ENCODE measurements at regions of chr3 and their contacts with region 1.

Region 1: DNA sequence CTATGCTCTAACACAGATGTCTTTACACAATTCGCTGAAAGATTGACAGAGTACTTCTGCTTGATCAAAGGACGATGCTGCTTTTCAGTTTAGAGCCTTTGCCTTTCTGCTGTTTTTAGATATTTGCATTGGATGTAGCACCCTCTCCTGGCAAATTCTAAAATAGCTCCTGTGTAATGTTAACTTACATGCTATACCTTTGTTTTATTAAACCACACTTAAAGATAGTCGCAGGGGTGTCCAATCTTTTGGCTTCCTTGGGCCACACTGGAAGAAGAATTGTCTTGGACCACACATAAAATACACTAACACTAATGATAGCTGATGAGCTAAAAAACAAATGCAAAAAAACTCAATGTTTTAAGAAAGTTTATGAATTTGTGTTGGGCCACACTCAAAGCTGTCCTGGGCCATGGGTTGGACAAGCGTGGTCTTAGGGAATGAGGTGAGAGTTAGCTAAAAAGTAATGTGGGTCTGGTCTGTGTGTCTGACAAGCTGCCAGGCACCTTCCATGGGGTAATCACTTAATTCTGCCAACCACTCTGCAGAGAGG is 62.9 kb downstream of the ATG7 start:
- DNase-seq: no peak
- H3K4me3 ChIP-seq: peak overlapping the region in 1 of 59 donors; percentile 4
- H3K27ac ChIP-seq: peak overlapping the region in 4 of 59 donors; percentile 21 to 62 (median 48)
- H3K27me3 ChIP-seq: no peaks in the 10 kb centered on the region
- CTCF ChIP-seq: peak in 55 of 56 donors; percentile 48 to 86 (median 72)

Region 2: GRCh38 chr3:10758304-10759061 is 576.6 kb before region 1 on chr3:
- intact Hi-C with region 1: loop called in 1 of 2 experiments (anchors 10 kb)
- DNase-seq: peak in 9 of 10 donors; percentile 61 to 83 (median 75)
- H3K4me3 ChIP-seq: no peak overlapping the region
- H3K27ac ChIP-seq: peak overlapping the region in 15 of 59 donors; percentile 3 to 59 (median 41)
- H3K27me3 ChIP-seq: no peaks in the 10 kb centered on the region
- CTCF ChIP-seq: peak; percentile 40 to 96 (median 89)

Region 3: GRCh38 chr3:11060500-11061251 is 274.5 kb before region 1 on chr3:
- intact Hi-C with region 1: loop called in 1 of 2 experiments (anchors 2 kb)
- DNase-seq: peak; percentile 35 to 86 (median 70)
- H3K4me3 ChIP-seq: peak overlapping the region in 57 of 59 donors; percentile 9 to 67 (median 47)
- H3K27ac ChIP-seq: peak overlapping the region in 34 of 59 donors; percentile 3 to 75 (median 40)
- H3K27me3 ChIP-seq: peaks cover 0 to 13% (median 0%) of the 10 kb centered on the region in 45 donors
- CTCF ChIP-seq: peak; percentile 78 to 98 (median 95)

Region 4: GRCh38 chr3:11155341-11156025 is 179.6 kb before region 1 on chr3:
- intact Hi-C with region 1: loop called (anchors 5 to 10 kb)
- DNase-seq: peak; percentile 44 to 90 (median 78)
- H3K4me3 ChIP-seq: peak overlapping the region; percentile 30 to 77 (median 64)
- H3K27ac ChIP-seq: peak overlapping the region in 53 of 59 donors; percentile 6 to 90 (median 65)
- H3K27me3 ChIP-seq: peaks cover 0 to 33% (median 0%) of the 10 kb centered on the region in 45 donors
- CTCF ChIP-seq: peak in 55 of 56 donors; percentile 31 to 70 (median 59)

Region 5: DNA sequence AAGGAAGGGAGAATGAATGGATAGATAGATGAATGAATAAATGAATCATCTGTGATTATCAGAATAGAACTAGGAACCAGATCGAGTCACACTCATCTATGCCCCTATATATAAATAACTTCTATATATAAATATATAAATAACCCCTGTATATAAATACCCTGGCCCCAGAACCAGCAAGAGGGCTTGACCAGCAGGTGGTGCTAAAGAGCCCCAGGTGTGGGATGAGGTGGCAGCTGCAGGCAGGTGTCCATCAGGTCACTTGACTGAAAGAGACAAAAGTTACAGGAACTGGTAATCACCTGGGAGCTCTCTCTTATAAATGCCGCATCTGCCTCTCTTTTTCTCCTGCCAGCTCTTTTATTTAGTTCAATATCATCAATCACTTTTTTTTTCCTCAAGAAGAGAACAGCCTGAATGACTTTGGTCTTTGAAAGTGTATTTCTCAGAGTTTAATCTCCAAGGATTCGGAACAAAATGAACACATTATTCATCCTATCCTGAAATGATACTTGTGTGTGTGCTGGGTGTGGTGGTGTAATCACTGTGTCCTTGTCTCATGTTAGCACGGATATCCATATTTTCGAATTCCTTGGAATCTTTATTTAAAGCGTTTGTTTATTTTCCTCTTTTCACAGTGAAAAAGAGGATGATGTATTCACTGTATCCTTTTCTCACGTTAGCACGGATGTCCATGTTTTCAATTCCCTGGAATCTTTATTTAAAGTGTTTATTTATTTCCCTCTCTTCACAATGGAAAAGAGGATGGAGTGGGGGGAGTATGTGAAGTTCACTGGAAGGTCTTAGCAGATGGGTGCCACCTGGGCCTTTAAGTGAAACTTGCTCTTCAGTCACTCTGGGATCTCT is 98.3 kb before region 1 on chr3:
- intact Hi-C with region 1: loop called in 1 of 2 experiments (anchors 5 kb)
- DNase-seq: peak in 3 of 10 donors; percentile 19 to 36 (median 22)
- H3K4me3 ChIP-seq: no peak overlapping the region
- H3K27ac ChIP-seq: no peak overlapping the region
- H3K27me3 ChIP-seq: peaks cover 0 to 5% (median 0%) of the 10 kb centered on the region in 45 donors
- CTCF ChIP-seq: peak; percentile 42 to 81 (median 65)

Region 6: DNA sequence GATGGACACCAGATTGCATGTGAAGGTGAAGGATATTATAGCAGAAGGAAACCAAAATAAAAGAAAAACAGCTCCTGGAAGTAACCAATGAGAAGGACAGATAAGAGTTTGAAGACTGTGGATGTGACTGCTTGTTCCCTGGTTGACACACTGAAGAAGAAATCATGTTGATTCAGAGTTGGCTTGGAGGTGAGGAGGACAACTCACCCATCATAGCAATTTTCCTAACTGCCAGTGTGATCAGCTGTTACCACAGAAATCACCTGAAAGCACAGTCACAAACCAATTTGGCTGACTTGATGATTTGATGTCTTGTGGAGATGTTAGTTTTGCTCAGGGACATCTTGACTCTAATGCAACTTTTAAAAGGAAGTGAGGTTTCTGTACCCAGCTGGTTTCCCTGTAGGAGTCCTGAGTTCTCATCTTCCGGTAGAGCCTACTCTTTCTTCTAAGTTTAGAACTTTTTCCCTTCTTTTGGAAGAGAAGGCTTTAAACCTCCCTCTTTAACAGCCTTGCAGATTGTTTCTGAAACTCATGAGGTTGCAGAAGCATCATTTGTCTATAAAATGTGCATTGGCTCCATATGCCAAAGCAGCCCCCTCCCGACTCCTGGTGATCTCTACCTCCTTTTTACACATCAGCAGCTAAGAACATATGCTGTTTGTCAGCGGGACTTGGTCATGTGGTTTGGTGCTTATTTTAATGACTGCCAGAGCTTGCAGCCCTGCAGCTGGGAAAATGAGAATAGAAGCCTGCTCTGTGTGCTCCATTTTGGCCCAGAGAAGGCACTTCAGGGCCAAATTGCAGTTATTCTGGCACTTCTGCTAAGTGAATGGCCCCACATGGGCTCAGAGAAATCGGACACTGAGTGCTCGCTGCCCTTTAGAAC is 52.6 kb before region 1 on chr3:
- intact Hi-C with region 1: loop called (anchors 5 to 10 kb)
- DNase-seq: peak; percentile 37 to 89 (median 75)
- H3K4me3 ChIP-seq: peak overlapping the region in 35 of 59 donors; percentile 1 to 45 (median 19)
- H3K27ac ChIP-seq: peak overlapping the region; percentile 17 to 95 (median 88)
- H3K27me3 ChIP-seq: no peaks in the 10 kb centered on the region
- CTCF ChIP-seq: peak in 11 of 56 donors; percentile 17 to 38 (median 22)

Region 7: DNA sequence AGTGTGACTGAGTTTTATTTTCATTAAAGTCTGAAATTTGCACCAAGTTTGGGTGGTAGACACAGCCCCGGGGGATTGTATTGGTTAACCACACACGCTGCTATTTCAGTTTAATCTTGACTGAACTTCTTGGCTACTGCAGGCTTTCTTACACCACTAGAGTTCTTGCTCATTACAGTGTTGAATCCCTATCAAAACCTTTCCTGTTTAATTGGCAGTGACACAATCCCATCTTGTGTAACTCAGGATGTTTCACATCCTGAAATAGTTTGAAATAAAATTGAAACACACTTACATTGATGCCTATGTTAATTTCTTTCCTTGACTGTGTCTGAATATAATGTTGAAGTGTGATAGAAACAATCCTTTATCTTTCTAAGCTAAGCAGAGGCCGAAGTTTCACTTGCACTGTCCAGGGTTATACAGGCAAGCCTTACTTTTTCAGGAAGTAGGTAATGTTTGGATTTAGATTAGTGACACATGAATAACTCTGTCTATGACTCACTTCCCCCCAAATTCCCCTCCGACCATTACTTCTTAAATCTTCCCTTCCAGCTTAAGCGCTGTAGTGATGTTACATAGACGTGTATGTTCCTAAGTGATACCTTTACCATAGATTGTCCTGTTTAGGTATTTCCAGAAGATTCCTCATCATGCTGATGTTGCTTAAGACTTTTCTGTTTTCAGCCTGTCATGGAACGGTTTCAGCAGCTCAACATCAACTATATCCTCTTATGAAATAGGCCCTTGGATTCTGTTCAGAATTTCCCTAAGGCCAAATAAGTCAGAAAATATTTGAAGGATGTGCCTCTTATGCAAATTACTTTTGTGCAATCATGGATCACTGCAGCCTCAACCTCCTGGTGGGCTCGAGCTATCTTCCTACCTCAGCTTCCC is 46.1 kb before region 1 on chr3:
- intact Hi-C with region 1: loop called (anchors 5 to 10 kb)
- DNase-seq: no peak
- H3K4me3 ChIP-seq: peak overlapping the region in 1 of 59 donors; percentile 14
- H3K27ac ChIP-seq: peak overlapping the region in 52 of 59 donors; percentile 5 to 84 (median 59)
- H3K27me3 ChIP-seq: no peaks in the 10 kb centered on the region
- CTCF ChIP-seq: no peak

Region 8: DNA sequence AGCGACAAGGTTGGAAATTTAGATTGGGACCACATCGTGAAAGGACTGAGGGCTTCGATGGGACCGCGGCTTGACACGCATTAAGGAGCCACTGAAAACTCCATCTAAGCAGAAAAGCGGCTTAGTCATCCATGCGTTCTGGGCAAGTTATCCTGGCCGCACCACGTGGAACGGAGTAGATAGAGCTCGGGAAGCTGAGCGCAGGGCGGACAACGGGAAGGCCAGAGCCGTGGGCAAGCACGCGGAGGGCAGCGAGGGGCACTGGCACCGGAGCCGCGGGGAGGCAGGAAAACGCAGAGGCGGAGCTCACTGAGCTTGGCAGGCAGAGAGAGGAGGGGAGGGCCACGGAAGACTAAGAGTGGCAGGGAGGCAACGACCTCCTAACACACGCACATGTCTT is 369.9 kb after region 1 on chr3:
- intact Hi-C with region 1: no loop called
- DNase-seq: peak in 6 of 10 donors; percentile 51 to 71 (median 55)
- H3K4me3 ChIP-seq: peak overlapping the region in 36 of 59 donors; percentile 2 to 46 (median 24)
- H3K27ac ChIP-seq: peak overlapping the region in 22 of 59 donors; percentile 2 to 71 (median 33)
- H3K27me3 ChIP-seq: no peaks in the 10 kb centered on the region
- CTCF ChIP-seq: no peak